Right ventricle myocardium inferior (tissue), 1 donor: ENCODE measurements at regions of chr11 and their contacts with region 1.

Region 1: DNA sequence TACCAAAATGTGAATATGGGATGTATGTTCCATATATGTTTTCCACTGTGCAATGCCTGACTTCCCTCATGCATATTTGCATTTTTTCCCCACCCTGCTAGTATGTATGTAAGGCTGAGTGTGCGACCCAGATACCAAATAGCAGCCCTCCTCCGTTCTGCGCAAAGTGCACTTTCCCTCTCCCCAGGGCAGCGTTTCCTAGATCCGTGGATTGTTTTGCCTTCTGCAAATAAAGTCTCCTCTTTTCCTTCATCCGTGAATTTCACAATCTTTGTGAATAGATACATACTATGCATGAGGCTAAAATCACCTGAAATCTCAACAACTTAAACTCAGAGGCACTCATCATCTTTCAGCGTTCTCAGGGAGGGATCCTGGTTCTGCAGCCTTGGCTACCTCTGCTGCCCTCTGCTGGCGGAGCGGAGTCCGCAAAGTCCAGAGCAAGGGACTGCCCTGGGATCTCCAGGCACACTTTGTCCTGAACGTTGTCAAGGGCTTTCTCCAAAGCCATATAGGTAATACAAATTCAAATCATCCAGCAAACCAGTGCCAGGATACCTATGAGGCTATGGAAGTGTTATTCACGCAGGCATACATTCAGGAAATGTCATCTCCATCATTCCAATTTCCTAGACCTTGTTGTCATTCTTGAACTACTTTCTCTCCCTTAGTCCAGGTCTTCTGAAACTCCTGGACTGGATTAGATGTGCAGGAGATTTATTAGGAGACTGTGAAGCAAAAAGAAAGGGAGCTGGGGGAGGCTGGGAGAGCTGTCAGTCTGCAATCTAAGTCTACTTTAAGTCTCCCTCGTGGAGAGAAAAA is 53.1 kb downstream of the CNTF start:
- DNase-seq: peak; percentile 80
- ATAC-seq: peak; percentile 89

Region 2: GRCh38 chr11:58573451-58574104 is 102.0 kb before region 1 on chr11:
- intact Hi-C with region 1: loop called (anchors 2 kb)
- DNase-seq: peak; percentile 66
- ATAC-seq: no peak